AG04450 (cell line): ENCODE measurements at regions of chr5 and their contacts with region 1.

Region 1: GRCh38 chr5:141557681-141558136 is 61.1 kb downstream of the DIAPH1 start:
- DNase-seq: peak; percentile 97
- H3K4me3 ChIP-seq: peak overlapping the region; percentile 25; the same call in 1 of the 2 replicates
- H3K27ac ChIP-seq: peak overlapping the region; percentile 84
- H3K27me3 ChIP-seq: no peaks in the 10 kb centered on the region
- CTCF ChIP-seq: peak; percentile 84

Region 2: GRCh38 chr5:141338538-141339306 is 219.0 kb before region 1 on chr5 and contains the start of gene PCDHGA2:
- CTCF ChIA-PET with region 1: interaction called, 57 read pairs
- POLR2A ChIA-PET with region 1: no interaction called
- DNase-seq: no peak
- H3K4me3 ChIP-seq: peak within 1 kb of the TSS; percentile 51
- H3K27ac ChIP-seq: no peak within 1 kb of the TSS
- H3K27me3 ChIP-seq: peaks cover 6% of the 10 kb centered on the region
- CTCF ChIP-seq: peak; percentile 57
- polyA plus RNA-seq, gene PCDHGA2: 6.1 and 6.3 TPM in 2 replicates

Region 3: DNA sequence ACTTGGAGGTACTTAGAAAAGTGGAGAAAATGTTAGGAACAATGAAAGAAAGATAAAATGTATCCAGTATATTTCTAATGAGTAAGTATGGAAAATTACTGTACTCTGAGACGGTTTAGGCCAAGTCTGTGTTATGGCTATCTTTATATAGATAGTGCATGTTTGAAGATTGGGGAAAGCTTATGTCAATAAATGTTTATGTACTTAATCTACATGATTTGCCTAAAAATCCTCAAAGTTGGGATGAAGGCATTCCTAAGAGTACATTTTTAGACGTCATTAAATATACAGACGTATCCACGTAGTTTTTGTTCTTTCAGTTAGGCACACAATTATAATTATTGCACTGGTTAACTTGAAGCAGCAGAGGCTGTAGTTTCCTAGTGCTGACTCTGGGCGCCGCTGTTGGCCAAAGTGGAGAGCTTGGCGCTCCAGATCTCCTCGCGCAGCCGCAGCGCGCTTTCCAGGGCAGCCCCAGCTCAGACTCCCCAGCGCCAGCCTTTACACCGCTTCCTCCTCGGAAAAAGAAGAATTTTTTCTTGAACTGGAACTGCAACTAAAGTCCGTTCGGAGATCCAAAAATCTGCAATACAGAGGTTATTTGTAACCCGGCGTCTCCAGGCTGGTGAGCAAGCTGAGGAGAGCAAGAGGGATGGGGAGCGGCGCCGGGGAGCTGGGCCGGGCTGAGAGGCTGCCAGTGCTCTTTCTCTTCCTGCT is 170.3 kb before region 1 on chr5 and contains the start of gene PCDHGB4:
- CTCF ChIA-PET with region 1: interaction called, 25 read pairs
- POLR2A ChIA-PET with region 1: no interaction called
- DNase-seq: no peak
- H3K4me3 ChIP-seq: peak within 1 kb of the TSS; percentile 31; the same call in 1 of the 2 replicates
- H3K27ac ChIP-seq: no peak within 1 kb of the TSS
- H3K27me3 ChIP-seq: peaks cover 6% of the 10 kb centered on the region
- CTCF ChIP-seq: peak; percentile 43
- polyA plus RNA-seq, gene PCDHGB4: 10.3 and 10.9 TPM in 2 replicates

Region 4: GRCh38 chr5:141420855-141421496 is 136.7 kb before region 1 on chr5 and contains the start of gene PCDHGA11:
- CTCF ChIA-PET with region 1: interaction called, 107 read pairs
- POLR2A ChIA-PET with region 1: interaction called, 3 read pairs
- DNase-seq: no peak
- H3K4me3 ChIP-seq: peak within 1 kb of the TSS; percentile 50
- H3K27ac ChIP-seq: peak within 1 kb of the TSS; percentile 39
- H3K27me3 ChIP-seq: no peaks in the 10 kb centered on the region
- CTCF ChIP-seq: peak; percentile 54
- polyA plus RNA-seq, gene PCDHGA11: 7.5 and 7.7 TPM in 2 replicates

Region 5: DNA sequence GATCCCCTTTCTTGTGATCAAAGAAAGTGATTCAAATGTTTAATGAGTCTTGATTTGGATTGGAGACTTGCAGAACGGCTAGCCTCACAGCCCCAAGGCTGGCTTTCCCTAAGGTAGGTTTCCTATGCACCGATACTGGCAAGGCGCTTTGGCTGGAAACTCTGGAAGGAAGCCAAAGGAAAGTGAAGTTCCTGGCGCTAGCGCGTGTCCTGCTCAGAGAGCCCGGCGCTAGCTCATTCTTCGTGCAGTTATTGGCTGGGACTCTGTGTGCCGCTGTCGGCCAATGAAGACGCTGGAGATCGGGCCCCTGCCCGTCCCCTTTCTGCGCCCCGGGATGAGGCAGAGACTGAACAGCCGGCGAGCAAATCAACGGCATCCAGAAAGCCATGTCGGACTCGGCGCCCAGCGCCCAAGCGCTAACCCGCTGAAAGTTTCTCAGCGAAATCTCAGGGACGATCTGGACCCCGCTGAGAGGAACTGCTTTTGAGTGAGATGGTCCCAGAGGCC is 82.0 kb before region 1 on chr5 and contains the start of gene PCDHGC3:
- CTCF ChIA-PET with region 1: interaction called, 68 read pairs
- POLR2A ChIA-PET with region 1: interaction called, 6 read pairs
- DNase-seq: peak; percentile 90
- H3K4me3 ChIP-seq: peak within 1 kb of the TSS; percentile 82
- H3K27ac ChIP-seq: peak within 1 kb of the TSS; percentile 81
- H3K27me3 ChIP-seq: no peaks in the 10 kb centered on the region
- CTCF ChIP-seq: peak; percentile 20
- polyA plus RNA-seq, gene PCDHGC3: 47.4 and 61.1 TPM in 2 replicates

Region 6: DNA sequence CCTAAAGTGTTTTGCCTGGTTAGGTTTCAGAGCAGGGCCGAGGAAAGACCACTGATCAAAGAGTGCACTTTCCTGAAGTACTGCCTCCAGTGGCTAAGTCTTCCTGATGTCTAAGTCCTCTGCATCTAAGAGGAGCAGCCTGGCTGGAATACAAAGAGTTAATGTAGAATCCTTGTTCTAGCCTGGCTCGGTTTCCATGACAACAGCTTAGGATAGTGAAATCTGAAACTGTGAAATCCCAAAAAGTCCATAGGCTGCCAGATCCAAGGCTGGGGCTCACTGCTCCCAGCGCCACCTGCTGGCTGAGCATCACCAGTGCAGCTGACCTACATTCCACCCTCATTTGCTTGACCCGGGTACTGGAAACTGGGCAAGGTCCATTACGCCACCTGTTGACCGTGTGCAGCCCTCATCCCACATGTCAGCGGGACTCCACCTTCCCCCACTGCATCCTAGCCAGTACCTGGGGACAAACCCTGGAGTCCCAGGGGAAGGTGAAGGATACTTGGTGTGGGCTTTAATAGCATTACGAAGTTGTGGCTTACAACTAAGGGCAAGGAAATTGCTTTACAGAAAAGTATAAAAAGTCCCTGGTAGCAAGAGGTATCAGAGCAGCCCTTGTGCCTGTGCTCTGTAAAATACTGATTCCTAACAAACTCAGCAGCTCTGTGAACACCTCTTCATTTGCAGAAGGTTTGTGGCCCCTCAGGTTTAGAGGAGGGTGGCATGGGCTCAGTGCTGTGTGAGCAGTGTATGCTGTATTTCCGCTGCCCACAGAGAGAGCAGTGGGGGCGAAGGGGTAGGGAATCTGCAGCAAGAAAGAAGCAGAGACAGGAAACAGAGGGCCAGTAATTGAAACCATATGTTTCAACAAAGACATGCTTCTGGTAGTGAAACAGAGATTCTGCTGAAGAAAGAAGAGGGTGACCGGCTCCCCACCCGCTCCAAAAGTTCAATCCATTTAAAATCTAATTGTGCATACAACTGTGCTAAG is 32.8 kb before region 1 on chr5:
- CTCF ChIA-PET with region 1: interaction called, 95 read pairs
- POLR2A ChIA-PET with region 1: interaction called, 7 read pairs
- DNase-seq: peak; percentile 95
- H3K4me3 ChIP-seq: peak overlapping the region; percentile 29
- H3K27ac ChIP-seq: peak overlapping the region; percentile 95
- H3K27me3 ChIP-seq: no peaks in the 10 kb centered on the region
- CTCF ChIP-seq: peak; percentile 99